Calu3 (cell line): ENCODE measurements at regions of chr4 and their contacts with region 1.

Region 1: GRCh38 chr4:176443117-176443516 is 123.4 kb downstream of the SPCS3 start:
- DNase-seq: peak; percentile 25
- H3K4me3 Mint-ChIP-seq: peak overlapping the region; percentile 7
- H3K27ac Mint-ChIP-seq: peak overlapping the region; percentile 80
- H3K4me1 Mint-ChIP-seq: peaks cover 33% of the 10 kb centered on the region
- H3K27me3 Mint-ChIP-seq: no peaks in the 10 kb centered on the region
- CTCF ChIP-seq: no peak

Region 2: DNA sequence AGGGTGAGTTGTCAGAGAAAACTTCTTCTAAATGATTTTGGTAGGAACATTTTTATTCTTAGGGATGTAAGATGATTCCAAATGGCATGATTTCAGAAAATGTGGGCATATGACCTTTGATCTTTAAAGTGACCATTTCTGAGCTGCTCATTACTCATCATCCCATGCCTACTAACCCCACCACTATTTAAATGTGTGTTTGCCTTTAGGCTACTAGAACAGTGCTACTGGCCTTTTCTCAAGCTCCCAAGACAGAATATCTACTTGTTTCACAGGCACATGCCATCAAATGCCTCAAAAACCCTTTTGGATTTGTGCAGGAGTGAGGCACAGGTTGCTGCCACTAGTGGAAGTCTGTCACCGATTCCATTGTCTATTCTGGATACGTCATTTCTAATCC is 1096.7 kb before region 1 on chr4:
- CTCF ChIA-PET with region 1: no interaction called
- intact Hi-C with region 1: no loop called
- DNase-seq: no peak
- H3K4me3 Mint-ChIP-seq: no peak overlapping the region
- H3K27ac Mint-ChIP-seq: no peak overlapping the region
- H3K4me1 Mint-ChIP-seq: peaks cover 7% of the 10 kb centered on the region
- H3K27me3 Mint-ChIP-seq: no peaks in the 10 kb centered on the region
- CTCF ChIP-seq: no peak

Region 3: DNA sequence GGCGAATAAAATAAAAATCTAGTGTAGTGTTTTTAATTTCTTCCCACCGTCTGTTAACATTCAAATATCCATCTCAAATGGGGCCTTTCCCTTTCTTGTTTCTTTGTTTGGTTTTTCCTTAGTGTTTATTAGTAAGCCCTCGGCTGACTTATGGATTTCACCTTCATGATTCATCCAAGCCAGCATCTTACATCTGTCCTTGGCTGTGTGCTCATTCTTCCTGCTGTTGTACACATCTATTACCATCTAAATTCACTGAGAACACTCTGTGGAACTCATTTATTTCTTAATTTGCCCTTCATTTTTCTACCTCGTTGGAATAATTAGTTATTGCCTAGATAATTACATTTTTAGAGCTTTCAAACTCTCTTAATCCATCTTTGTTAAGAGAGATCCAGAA is 38.5 kb before region 1 on chr4:
- CTCF ChIA-PET with region 1: no interaction called
- intact Hi-C with region 1: no loop called
- DNase-seq: no peak
- H3K4me3 Mint-ChIP-seq: no peak overlapping the region
- H3K27ac Mint-ChIP-seq: no peak overlapping the region
- H3K4me1 Mint-ChIP-seq: peaks cover 2% of the 10 kb centered on the region
- H3K27me3 Mint-ChIP-seq: no peaks in the 10 kb centered on the region
- CTCF ChIP-seq: no peak

Region 4: DNA sequence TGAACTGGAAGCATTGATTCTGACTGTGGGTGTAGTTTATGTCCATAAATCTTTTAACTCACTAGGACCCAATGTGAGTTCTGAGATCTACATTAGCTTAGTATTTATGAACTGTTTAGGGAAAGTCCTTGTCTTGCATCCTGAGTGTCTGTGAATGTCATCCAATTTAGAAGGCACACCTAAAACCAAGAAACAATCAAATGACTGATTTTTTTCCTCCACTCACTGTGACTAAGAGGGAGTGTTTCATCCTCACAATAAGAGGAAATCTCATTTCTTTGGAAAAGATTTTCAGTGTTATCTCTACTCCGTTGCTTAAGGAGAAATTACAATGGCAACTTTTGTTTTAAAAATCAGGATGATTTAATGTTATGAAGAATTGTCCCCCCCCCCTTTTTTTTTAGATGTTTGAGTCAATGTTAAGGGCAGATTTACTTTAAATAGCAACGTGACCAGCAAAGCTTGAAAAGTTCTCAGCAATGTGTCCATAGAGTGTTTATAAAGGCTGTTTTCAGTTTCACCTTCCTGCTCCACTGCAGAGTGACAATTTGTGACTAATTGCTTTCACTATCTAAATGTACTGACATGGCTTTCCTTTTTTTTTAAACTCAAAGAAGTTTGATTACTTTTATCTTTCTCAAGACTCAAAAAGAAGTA is 49.7 kb after region 1 on chr4:
- CTCF ChIA-PET with region 1: interaction called, 3 read pairs
- intact Hi-C with region 1: loop called (anchors 5 kb)
- DNase-seq: no peak
- H3K4me3 Mint-ChIP-seq: no peak overlapping the region
- H3K27ac Mint-ChIP-seq: no peak overlapping the region
- H3K4me1 Mint-ChIP-seq: no peaks in the 10 kb centered on the region
- H3K27me3 Mint-ChIP-seq: no peaks in the 10 kb centered on the region
- CTCF ChIP-seq: no peak

Region 5: GRCh38 chr4:176538217-176538925 is 95.3 kb after region 1 on chr4:
- CTCF ChIA-PET with region 1: no interaction called
- intact Hi-C with region 1: loop called (anchors 10 kb)
- DNase-seq: no peak
- H3K4me3 Mint-ChIP-seq: no peak overlapping the region
- H3K27ac Mint-ChIP-seq: no peak overlapping the region
- H3K4me1 Mint-ChIP-seq: peaks cover 13% of the 10 kb centered on the region
- H3K27me3 Mint-ChIP-seq: no peaks in the 10 kb centered on the region
- CTCF ChIP-seq: no peak

Region 6: DNA sequence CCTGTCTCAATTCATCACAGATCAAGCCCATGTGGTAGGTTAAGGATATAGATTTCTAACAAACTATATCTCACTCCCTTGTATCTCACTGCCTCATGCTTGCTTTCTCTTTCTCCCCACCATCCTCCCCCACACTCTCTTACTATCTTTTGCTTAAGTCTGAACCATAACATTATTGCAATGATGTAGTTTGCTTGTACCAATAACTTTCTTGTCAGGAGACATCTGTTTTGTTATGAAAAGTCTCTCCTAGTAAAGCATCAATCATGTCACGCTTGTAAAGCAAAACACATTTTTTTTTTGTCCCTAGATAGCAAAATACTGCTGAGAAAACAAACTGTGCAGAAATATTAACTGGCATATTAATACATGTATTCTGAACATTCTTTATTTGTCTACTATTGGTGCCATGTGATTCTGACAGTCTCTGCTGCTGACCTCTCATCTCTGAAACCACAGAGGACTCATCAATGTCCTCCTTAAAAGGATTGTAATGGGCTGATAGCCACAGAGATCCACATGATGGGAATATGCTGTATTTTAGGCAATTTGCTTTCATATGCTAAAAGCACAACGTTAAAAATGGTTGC is 132.1 kb after region 1 on chr4:
- CTCF ChIA-PET with region 1: no interaction called
- intact Hi-C with region 1: no loop called
- DNase-seq: no peak
- H3K4me3 Mint-ChIP-seq: no peak overlapping the region
- H3K27ac Mint-ChIP-seq: no peak overlapping the region
- H3K4me1 Mint-ChIP-seq: no peaks in the 10 kb centered on the region
- H3K27me3 Mint-ChIP-seq: no peaks in the 10 kb centered on the region
- CTCF ChIP-seq: no peak